Activated T-helper 1 cell treated with anti-CD3 and anti-CD28 coated beads, Interleukin-12 subunit alpha, Interleukin-12 subunit beta, Interleukin-2, Interleukin-4 antibody, amounts not matched to agents 30 ng/mL and 10 ng/mL and 1 ng/mL, durations not matched to agents 14 hours and 24 hours and 36 hours (primary cell): ENCODE measurements at regions of chr1 and their contacts with region 1.

Region 1: GRCh38 chr1:183520379-183520778 is 48.1 kb downstream of the SMG7 start:
- DNase-seq: no peak
- H3K4me3 Mint-ChIP-seq: no peak overlapping the region
- H3K27ac Mint-ChIP-seq: no peak overlapping the region
- H3K4me1 Mint-ChIP-seq: peaks cover 18% of the 10 kb centered on the region
- H3K27me3 Mint-ChIP-seq: no peaks in the 10 kb centered on the region

Region 2: DNA sequence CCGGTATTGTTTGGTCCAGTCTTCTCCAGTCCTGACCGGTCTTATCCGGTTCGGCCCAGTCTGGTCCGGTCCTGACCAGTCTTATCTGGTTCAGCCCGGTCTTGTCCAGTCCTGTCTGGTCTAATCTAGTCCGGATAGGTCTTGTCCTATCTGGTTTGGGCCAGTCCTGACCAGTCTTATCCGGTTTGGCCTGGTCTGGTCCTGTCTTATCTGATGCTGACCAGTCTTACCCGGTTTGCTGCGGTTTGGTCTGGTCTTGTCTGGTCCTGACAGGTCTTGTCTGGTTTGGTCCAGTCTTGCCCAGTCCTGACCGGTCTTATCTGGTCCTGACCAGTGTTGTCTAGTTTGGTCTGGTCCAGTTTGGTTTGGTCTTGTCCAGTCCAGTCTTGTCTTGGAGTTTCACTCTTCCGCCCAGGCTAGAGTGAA is 651.1 kb before region 1 on chr1:
- intact Hi-C with region 1: loop called (anchors 10 kb)
- DNase-seq: no peak
- H3K4me3 Mint-ChIP-seq: no peak overlapping the region
- H3K27ac Mint-ChIP-seq: no peak overlapping the region
- H3K4me1 Mint-ChIP-seq: peaks cover 17% of the 10 kb centered on the region
- H3K27me3 Mint-ChIP-seq: no peaks in the 10 kb centered on the region

Region 3: DNA sequence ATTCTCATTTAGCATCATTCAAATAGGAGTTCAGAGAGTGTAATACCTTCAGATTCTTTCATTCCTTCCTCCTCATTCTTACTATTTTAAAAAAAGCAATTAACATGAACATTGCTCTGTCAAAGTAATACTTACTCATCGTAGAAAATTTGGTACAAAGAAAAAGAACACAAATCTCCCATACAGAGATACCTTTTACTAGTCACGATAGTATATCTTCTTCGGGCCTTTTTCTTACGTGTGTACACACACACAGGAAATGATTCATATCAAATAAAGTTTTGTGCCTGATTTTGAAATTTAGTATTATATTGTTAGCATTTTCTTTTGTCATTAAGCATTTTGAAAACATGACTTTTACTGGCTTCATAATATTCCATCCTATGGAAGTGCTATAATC is 17.0 kb after region 1 on chr1:
- intact Hi-C with region 1: loop called (anchors 2 kb)
- DNase-seq: no peak
- H3K4me3 Mint-ChIP-seq: no peak overlapping the region
- H3K27ac Mint-ChIP-seq: no peak overlapping the region
- H3K4me1 Mint-ChIP-seq: peaks cover 5% of the 10 kb centered on the region
- H3K27me3 Mint-ChIP-seq: no peaks in the 10 kb centered on the region

Region 4: GRCh38 chr1:183567584-183567983 is 47.2 kb after region 1 on chr1:
- intact Hi-C with region 1: no loop called
- DNase-seq: no peak
- H3K4me3 Mint-ChIP-seq: no peak overlapping the region
- H3K27ac Mint-ChIP-seq: peak overlapping the region; percentile 66
- H3K4me1 Mint-ChIP-seq: peaks cover 23% of the 10 kb centered on the region
- H3K27me3 Mint-ChIP-seq: no peaks in the 10 kb centered on the region